ENCODE measurements at regions of chr15 and their contacts with region 1.

Region 1: GRCh38 chr15:68875377-68876116 is 54.8 kb upstream of the SPESP1 start:
- DNase-seq: peak; percentile 96
- ATAC-seq: peak; percentile 87
- H3K4me3 Mint-ChIP-seq: peak overlapping the region; percentile 76
- H3K27ac Mint-ChIP-seq: no peak overlapping the region
- H3K4me1 Mint-ChIP-seq: peaks cover 9% of the 10 kb centered on the region
- H3K27me3 Mint-ChIP-seq: peaks cover 19% of the 10 kb centered on the region
- CTCF ChIP-seq: peak; percentile 84

Region 2: GRCh38 chr15:68589783-68590710 is 285.5 kb before region 1 on chr15:
- CTCF ChIA-PET with region 1: no interaction called
- POLR2A ChIA-PET with region 1: no interaction called
- DNase-seq: no peak
- ATAC-seq: peak; percentile 39
- H3K4me3 Mint-ChIP-seq: no peak overlapping the region
- H3K27ac Mint-ChIP-seq: no peak overlapping the region
- H3K4me1 Mint-ChIP-seq: peaks cover 28% of the 10 kb centered on the region
- H3K27me3 Mint-ChIP-seq: no peaks in the 10 kb centered on the region
- CTCF ChIP-seq: no peak

Region 3: GRCh38 chr15:68650901-68651709 is 224.4 kb before region 1 on chr15:
- CTCF ChIA-PET with region 1: interaction called, 12 read pairs
- POLR2A ChIA-PET with region 1: no interaction called
- DNase-seq: peak; percentile 98
- ATAC-seq: peak; percentile 96
- H3K4me3 Mint-ChIP-seq: peak overlapping the region; percentile 53
- H3K27ac Mint-ChIP-seq: no peak overlapping the region; the same call in 1 of the 2 replicates
- H3K4me1 Mint-ChIP-seq: peaks cover 43% of the 10 kb centered on the region
- H3K27me3 Mint-ChIP-seq: no peaks in the 10 kb centered on the region
- CTCF ChIP-seq: peak; percentile 97

Region 4: GRCh38 chr15:68700455-68701123 is 175.0 kb before region 1 on chr15:
- CTCF ChIA-PET with region 1: interaction called, 11 read pairs
- POLR2A ChIA-PET with region 1: no interaction called
- DNase-seq: peak; percentile 33
- ATAC-seq: peak; percentile 71
- H3K4me3 Mint-ChIP-seq: peak overlapping the region; percentile 38
- H3K27ac Mint-ChIP-seq: no peak overlapping the region; the same call in 1 of the 2 replicates
- H3K4me1 Mint-ChIP-seq: peaks cover 26% of the 10 kb centered on the region
- H3K27me3 Mint-ChIP-seq: peaks cover 4% of the 10 kb centered on the region; the same call in 1 of the 2 replicates
- CTCF ChIP-seq: no peak

Region 5: GRCh38 chr15:68783226-68784058 is 92.1 kb before region 1 on chr15:
- CTCF ChIA-PET with region 1: interaction called, 72 read pairs
- POLR2A ChIA-PET with region 1: interaction called, 3 read pairs
- DNase-seq: peak; percentile 77
- ATAC-seq: peak; percentile 93
- H3K4me3 Mint-ChIP-seq: 0 out of 2 replicates have a peak overlapping the region, but pooled peaks have one; percentile 1
- H3K27ac Mint-ChIP-seq: peak overlapping the region; percentile 83
- H3K4me1 Mint-ChIP-seq: peaks cover 37% of the 10 kb centered on the region
- H3K27me3 Mint-ChIP-seq: no peaks in the 10 kb centered on the region
- CTCF ChIP-seq: peak; percentile 74

Region 6: GRCh38 chr15:68820295-68821189 is 55.0 kb before region 1 on chr15 and contains the start of gene ANP32A:
- CTCF ChIA-PET with region 1: interaction called, 19 read pairs
- POLR2A ChIA-PET with region 1: interaction called, 4 read pairs
- DNase-seq: peak; percentile 97
- ATAC-seq: peak; percentile 77
- H3K4me3 Mint-ChIP-seq: peak within 1 kb of the TSS; percentile 99
- H3K27ac Mint-ChIP-seq: peak within 1 kb of the TSS; percentile 98
- H3K4me1 Mint-ChIP-seq: peaks cover 39% of the 10 kb centered on the region
- H3K27me3 Mint-ChIP-seq: peaks cover 41% of the 10 kb centered on the region
- CTCF ChIP-seq: no peak
- total RNA-seq, gene ANP32A: 232 to 253 TPM (median 242 TPM) in 3 replicates

Region 7: DNA sequence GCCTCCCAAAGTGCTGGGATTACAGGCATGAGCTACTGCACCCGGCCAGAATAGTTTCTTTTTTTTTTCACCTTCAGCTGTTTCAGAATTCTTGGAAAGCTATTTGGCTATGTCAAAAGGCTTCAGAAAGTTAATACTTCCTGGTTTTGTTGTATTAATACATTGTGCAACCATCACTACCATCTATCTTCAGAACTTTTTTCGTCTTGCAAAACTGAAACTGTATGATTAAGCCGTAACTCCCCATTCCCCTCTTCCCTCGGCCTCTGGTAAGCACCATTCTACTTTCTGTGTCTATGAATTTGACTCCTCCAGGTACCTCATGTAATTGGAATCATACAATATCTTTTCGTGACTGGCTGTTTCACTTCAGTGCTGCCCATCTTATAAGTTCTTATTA is 133.8 kb after region 1 on chr15:
- CTCF ChIA-PET with region 1: no interaction called
- POLR2A ChIA-PET with region 1: no interaction called
- DNase-seq: no peak
- ATAC-seq: no peak
- H3K4me3 Mint-ChIP-seq: no peak overlapping the region
- H3K27ac Mint-ChIP-seq: no peak overlapping the region
- H3K4me1 Mint-ChIP-seq: peaks cover 4% of the 10 kb centered on the region; the same call in 1 of the 2 replicates
- H3K27me3 Mint-ChIP-seq: peaks cover 11% of the 10 kb centered on the region
- CTCF ChIP-seq: no peak

Region 8: GRCh38 chr15:69031013-69032001 is 155.8 kb after region 1 on chr15:
- CTCF ChIA-PET with region 1: interaction called, 30 read pairs
- POLR2A ChIA-PET with region 1: no interaction called
- DNase-seq: peak; percentile 81
- ATAC-seq: peak; percentile 93
- H3K4me3 Mint-ChIP-seq: peak overlapping the region; percentile 58
- H3K27ac Mint-ChIP-seq: no peak overlapping the region
- H3K4me1 Mint-ChIP-seq: peaks cover 10% of the 10 kb centered on the region
- H3K27me3 Mint-ChIP-seq: peaks cover 18% of the 10 kb centered on the region
- CTCF ChIP-seq: 0 out of 2 replicates have a peak, but pooled peaks have one; percentile 32

Measured in WTC11 (cell line).